ENCODE measurements at regions of chr3 and their contacts with region 1.

Region 1: DNA sequence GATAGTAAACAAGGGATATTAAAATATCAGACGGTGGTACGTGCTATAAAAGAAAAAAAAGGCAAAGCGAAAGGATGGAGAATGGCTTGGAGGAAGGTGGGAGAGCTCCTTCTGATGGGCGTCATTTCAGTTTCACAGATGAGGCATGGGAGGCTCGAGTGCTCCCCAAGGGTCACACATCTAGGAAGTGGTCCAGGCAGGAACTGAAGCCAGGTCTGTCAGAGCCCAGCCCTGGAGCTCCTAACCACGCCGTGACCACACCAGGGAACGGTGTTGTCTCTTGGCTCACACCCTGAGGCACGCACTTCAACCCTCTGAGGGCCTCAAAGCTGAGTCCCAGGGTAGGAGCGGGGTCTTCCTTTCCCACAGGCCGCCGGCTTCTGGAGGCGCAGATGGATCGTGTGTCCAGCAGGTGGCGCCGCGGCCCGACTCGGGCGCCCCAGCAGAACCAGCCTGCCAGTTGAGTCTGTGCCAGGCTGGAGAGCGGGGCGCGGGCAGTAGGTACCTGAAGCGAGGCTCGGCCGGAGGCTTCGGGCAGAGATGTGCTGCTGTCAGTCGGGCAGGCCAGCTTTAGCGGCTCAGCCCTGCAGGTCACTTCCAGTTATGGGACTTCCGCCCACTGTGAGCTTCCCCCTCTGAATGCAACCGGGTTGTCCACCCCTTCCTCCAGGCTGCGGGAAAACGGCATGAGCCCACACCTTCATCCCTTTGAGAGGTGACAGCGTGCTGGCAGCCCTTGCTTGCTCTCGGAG is 68.1 kb downstream of the SLC6A1 start:
- DNase-seq: peak; percentile 78
- H3K4me3 Mint-ChIP-seq: no peak overlapping the region
- H3K27ac Mint-ChIP-seq: no peak overlapping the region
- H3K4me1 Mint-ChIP-seq: no peaks in the 10 kb centered on the region
- H3K27me3 Mint-ChIP-seq: peaks cover 14% of the 10 kb centered on the region
- CTCF ChIP-seq: peak; percentile 91

Region 2: GRCh38 chr3:10945683-10946287 is 114.9 kb before region 1 on chr3:
- CTCF ChIA-PET with region 1: no interaction called
- intact Hi-C with region 1: loop called (anchors 1 kb)
- DNase-seq: peak; percentile 70
- H3K4me3 Mint-ChIP-seq: no peak overlapping the region
- H3K27ac Mint-ChIP-seq: no peak overlapping the region
- H3K4me1 Mint-ChIP-seq: no peaks in the 10 kb centered on the region
- H3K27me3 Mint-ChIP-seq: peaks cover 94% of the 10 kb centered on the region
- CTCF ChIP-seq: peak; percentile 86

Region 3: GRCh38 chr3:11006986-11007933 is 53.4 kb before region 1 on chr3:
- CTCF ChIA-PET with region 1: no interaction called
- intact Hi-C with region 1: no loop called
- DNase-seq: no peak
- H3K4me3 Mint-ChIP-seq: no peak overlapping the region
- H3K27ac Mint-ChIP-seq: no peak overlapping the region
- H3K4me1 Mint-ChIP-seq: no peaks in the 10 kb centered on the region
- H3K27me3 Mint-ChIP-seq: peaks cover 65% of the 10 kb centered on the region
- CTCF ChIP-seq: no peak

Region 4: GRCh38 chr3:11201246-11202024 is 140.8 kb after region 1 on chr3:
- CTCF ChIA-PET with region 1: interaction called, 10 read pairs
- intact Hi-C with region 1: loop called (anchors 10 kb)
- DNase-seq: peak; percentile 40
- H3K4me3 Mint-ChIP-seq: no peak overlapping the region
- H3K27ac Mint-ChIP-seq: peak overlapping the region; percentile 46
- H3K4me1 Mint-ChIP-seq: peaks cover 14% of the 10 kb centered on the region
- H3K27me3 Mint-ChIP-seq: no peaks in the 10 kb centered on the region
- CTCF ChIP-seq: no peak